IMR-90 (cell line): ENCODE measurements at regions of chr17 and their contacts with region 1.

Region 1: DNA sequence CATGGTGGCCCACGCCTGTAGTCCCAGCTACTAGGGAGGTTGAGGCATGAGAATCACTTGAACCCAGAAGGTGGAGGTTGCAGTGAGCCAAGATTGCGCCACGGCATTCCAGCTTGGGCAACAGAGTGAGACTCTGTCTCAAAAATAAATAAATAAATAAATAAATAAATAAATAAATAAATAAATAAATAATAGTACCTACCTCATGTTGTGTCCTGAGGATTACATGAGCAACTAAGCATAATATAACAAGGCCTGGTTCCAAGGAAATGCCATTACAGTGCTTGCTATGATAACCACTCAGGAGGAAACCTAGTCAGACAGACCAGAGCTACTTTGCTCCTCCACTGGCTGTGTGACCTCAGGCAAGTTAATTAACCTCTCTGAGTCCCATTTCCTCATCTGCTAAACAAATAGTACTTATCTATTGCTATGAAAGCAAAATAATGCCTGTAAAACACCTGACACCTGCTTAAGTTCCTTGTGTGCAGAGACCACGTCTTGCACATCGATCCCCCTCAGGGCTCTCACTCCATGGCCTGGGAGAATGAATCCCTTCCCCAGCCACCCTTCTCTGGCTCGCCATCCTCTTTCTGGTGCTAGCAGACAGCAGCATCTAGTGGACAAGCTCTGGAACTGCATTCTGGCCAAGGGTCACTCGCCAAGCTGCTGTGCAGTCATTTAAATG is 7.5 kb downstream of the EPOP start:
- DNase-seq: peak; percentile 70
- ATAC-seq: peak; percentile 94
- H3K4me3 ChIP-seq: no peak overlapping the region
- H3K27ac ChIP-seq: no peak overlapping the region
- H3K4me1 ChIP-seq: no peaks in the 10 kb centered on the region
- H3K27me3 ChIP-seq: peaks cover 54% of the 10 kb centered on the region
- CTCF ChIP-seq: peak; percentile 99
- POLR2A ChIP-seq: 0 out of 2 replicates have a peak, but pooled peaks have one; percentile 41
- RAD21 ChIP-seq: peak; percentile 99

Region 2: DNA sequence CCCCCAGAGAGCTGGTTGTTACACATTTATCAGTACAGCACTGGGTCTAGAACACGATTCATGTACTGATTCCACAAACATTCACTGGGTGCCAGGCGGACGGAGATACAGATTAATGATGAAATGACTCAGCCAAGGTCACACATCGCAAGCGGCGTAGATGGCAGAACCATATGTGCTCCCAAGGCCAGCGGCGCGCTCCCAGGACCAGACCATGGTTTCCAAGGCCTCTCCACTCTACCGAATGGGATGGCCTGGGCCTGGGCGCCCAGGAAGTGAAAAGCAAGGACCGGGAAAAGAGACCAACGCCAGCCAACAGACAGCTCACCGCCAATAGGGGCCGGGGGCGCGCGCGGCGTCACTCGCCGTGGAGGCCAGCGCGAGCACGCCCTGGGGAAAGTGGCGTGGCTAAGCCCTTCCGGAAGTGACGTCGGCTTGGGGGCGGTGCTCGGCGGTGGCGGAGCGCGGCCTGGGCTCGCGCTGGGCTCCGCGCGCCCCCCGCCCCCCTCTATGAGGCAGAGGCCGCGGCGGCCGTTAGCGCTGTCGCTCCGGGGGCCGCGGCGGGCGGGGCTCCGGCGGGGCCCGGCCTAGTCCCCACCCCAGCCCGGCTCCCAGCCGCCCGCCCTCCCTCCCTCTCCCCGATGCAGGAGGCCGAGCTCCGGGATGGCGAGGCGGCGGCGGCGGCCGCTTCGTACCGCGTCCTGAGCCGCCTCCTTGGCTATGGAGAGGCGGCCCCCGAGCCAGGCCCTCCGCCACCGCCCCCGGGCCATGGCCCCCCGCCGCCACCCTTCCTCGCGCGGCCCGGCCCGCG is 315.6 kb before region 1 on chr17 and contains the start of gene SOCS7:
- CTCF ChIA-PET with region 1: interaction called, 3 read pairs
- POLR2A ChIA-PET with region 1: no interaction called
- dilution Hi-C with region 1: no loop called
- in situ Hi-C with region 1: loop called (anchors 10 kb)
- intact Hi-C with region 1: loop called (anchors 2 kb)
- DNase-seq: peak; percentile 90
- ATAC-seq: peak; percentile 89
- H3K4me3 ChIP-seq: peak within 1 kb of the TSS; percentile 80
- H3K27ac ChIP-seq: peak within 1 kb of the TSS; percentile 78
- H3K4me1 ChIP-seq: peaks cover 4% of the 10 kb centered on the region
- H3K27me3 ChIP-seq: no peaks in the 10 kb centered on the region
- CTCF ChIP-seq: no peak
- POLR2A ChIP-seq: peak; percentile 80
- RAD21 ChIP-seq: no peak
- total RNA-seq, gene SOCS7: 6.5 and 7.5 TPM in 2 replicates

Region 3: GRCh38 chr17:38421171-38421841 is 245.9 kb before region 1 on chr17:
- CTCF ChIA-PET with region 1: interaction called, 3 read pairs
- POLR2A ChIA-PET with region 1: no interaction called
- dilution Hi-C with region 1: no loop called
- in situ Hi-C with region 1: no loop called
- intact Hi-C with region 1: loop called (anchors 2 kb)
- DNase-seq: peak; percentile 69
- ATAC-seq: peak; percentile 44
- H3K4me3 ChIP-seq: no peak overlapping the region
- H3K27ac ChIP-seq: no peak overlapping the region
- H3K4me1 ChIP-seq: peaks cover 17% of the 10 kb centered on the region
- H3K27me3 ChIP-seq: peaks cover 27% of the 10 kb centered on the region
- CTCF ChIP-seq: no peak
- POLR2A ChIP-seq: no peak
- RAD21 ChIP-seq: no peak

Region 4: GRCh38 chr17:38444151-38444550 is 223.1 kb before region 1 on chr17:
- CTCF ChIA-PET with region 1: no interaction called
- POLR2A ChIA-PET with region 1: interaction called, 4 read pairs
- dilution Hi-C with region 1: no loop called
- in situ Hi-C with region 1: no loop called
- intact Hi-C with region 1: loop called (anchors 5 kb)
- DNase-seq: peak; percentile 63
- ATAC-seq: peak; percentile 88
- H3K4me3 ChIP-seq: no peak overlapping the region
- H3K27ac ChIP-seq: no peak overlapping the region; the same call in 1 of the 2 replicates
- H3K4me1 ChIP-seq: peaks cover 29% of the 10 kb centered on the region
- H3K27me3 ChIP-seq: no peaks in the 10 kb centered on the region
- CTCF ChIP-seq: peak; percentile 96
- POLR2A ChIP-seq: peak; percentile 52; the same call in 1 of the 2 replicates
- RAD21 ChIP-seq: peak; percentile 98

Region 5: DNA sequence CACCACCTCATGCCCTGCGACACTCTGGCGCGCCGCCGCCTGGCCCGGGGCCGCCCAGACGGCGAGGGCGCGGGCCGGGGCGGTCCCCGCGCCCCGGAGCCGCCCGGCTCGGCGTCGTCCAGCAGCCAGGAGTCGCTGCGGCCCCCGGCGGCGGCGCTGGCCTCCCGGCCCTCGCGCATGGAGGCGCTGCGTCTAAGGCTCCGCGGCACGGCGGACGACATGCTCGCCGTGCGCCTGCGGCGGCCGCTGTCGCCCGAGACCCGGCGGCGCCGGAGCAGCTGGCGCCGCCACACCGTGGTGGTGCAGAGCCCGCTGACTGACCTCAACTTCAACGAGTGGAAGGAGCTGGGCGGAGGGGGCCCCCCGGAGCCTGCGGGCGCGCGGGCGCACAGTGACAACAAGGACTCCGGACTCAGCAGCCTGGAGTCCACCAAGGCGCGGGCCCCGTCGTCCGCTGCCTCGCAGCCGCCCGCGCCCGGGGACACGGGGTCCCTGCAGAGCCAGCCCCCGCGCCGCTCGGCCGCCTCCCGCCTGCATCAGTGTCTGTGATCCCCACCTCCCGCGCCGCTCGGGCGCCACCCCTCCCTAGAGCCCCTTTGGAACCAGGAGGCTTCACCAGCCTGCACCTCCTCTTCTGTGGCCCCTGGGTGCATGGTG is 156.7 kb before region 1 on chr17:
- CTCF ChIA-PET with region 1: interaction called, 5 read pairs
- POLR2A ChIA-PET with region 1: no interaction called
- dilution Hi-C with region 1: no loop called
- in situ Hi-C with region 1: no loop called
- intact Hi-C with region 1: loop called (anchors 5 kb)
- DNase-seq: no peak
- ATAC-seq: peak; percentile 13
- H3K4me3 ChIP-seq: no peak overlapping the region
- H3K27ac ChIP-seq: no peak overlapping the region
- H3K4me1 ChIP-seq: peaks cover 12% of the 10 kb centered on the region
- H3K27me3 ChIP-seq: no peaks in the 10 kb centered on the region
- CTCF ChIP-seq: no peak; the same call in 1 of the 2 replicates
- POLR2A ChIP-seq: no peak
- RAD21 ChIP-seq: no peak

Region 6: DNA sequence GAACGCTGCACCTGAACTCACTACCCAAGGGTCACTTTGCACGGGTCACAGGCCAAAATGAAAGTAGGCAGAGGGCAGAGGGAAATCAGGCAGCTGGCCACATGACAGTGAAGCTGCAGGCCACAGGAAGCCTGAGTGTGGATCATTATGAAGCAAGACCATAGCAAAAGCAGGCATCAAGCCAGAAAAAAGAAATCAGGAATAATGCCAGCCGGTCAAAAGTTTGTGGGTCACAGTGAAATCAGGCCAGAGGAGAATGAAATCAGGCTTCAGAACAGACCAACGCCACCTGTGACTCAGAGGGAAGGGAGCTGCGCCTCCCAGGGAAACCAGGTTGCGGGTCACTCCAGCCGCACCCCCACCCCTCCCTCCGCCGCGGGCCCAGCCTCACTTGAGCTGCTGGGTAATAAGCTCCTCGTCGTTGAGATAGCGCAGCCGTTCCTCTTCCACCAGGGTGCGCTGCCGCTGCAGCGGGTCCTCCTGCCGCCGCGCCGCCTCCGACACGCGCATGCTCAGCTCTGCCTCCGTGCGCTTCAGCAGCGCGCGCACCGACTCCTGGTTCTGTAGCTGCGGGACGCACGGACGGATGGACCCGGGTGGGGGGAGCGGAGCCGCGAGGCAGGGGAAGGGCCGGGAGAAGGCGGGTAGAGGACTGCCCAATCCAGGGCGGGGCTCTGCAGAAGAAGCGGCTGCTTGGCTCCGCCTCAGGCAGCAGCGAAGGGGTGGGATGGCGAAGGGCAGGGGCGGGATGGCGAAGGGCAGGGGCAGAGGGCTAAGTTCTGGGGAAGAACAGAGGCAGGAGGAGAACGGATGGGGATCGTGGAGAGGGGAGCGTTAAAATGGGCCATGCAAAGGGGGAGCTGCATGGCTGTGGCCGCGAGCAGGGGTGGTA is 109.2 kb before region 1 on chr17:
- CTCF ChIA-PET with region 1: interaction called, 17 read pairs
- POLR2A ChIA-PET with region 1: no interaction called
- dilution Hi-C with region 1: no loop called
- in situ Hi-C with region 1: loop called (anchors 10 kb)
- intact Hi-C with region 1: loop called (anchors 1 kb)
- DNase-seq: peak; percentile 86
- ATAC-seq: peak; percentile 97
- H3K4me3 ChIP-seq: peak overlapping the region; percentile 24
- H3K27ac ChIP-seq: no peak overlapping the region
- H3K4me1 ChIP-seq: peaks cover 2% of the 10 kb centered on the region; the same call in 1 of the 2 replicates
- H3K27me3 ChIP-seq: peaks cover 70% of the 10 kb centered on the region
- CTCF ChIP-seq: peak; percentile 93
- POLR2A ChIP-seq: no peak
- RAD21 ChIP-seq: peak; percentile 77

Region 7: DNA sequence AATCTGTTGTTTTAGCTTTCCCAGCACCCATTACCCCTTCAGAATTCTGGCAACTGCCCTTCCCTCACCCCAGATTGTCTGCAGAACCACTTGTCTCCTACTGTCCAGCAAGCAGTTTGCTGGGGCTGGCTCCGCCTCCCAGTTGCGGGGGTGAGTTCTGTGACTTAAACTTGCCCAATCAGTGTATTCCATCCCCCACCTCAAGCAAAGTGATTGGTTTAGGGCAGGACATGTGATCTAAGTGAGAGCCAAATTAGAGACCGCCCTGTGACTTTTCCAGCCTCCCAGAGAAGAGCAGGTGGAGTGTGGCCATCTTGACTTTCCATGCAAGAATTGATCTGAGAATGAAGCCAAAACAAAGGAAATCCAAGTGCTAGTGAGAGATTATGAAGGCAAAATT is 38.8 kb before region 1 on chr17:
- CTCF ChIA-PET with region 1: no interaction called
- POLR2A ChIA-PET with region 1: no interaction called
- dilution Hi-C with region 1: no loop called
- in situ Hi-C with region 1: no loop called
- intact Hi-C with region 1: no loop called
- DNase-seq: peak; percentile 6
- ATAC-seq: no peak
- H3K4me3 ChIP-seq: no peak overlapping the region
- H3K27ac ChIP-seq: no peak overlapping the region
- H3K4me1 ChIP-seq: no peaks in the 10 kb centered on the region
- H3K27me3 ChIP-seq: peaks cover 11% of the 10 kb centered on the region
- CTCF ChIP-seq: no peak
- POLR2A ChIP-seq: no peak
- RAD21 ChIP-seq: no peak